ENCODE measurements at regions of chr1 and their contacts with region 1.

Region 1: GRCh38 chr1:154669464-154670282 is 61.7 kb upstream of the ADAR start:
- DNase-seq: peak; percentile 91
- ATAC-seq: peak; percentile 100
- H3K4me3 ChIP-seq: no peak overlapping the region
- H3K27ac ChIP-seq: no peak overlapping the region
- H3K4me1 ChIP-seq: no peaks in the 10 kb centered on the region
- H3K27me3 ChIP-seq: peaks cover 6% of the 10 kb centered on the region; the same call in 1 of the 2 replicates
- CTCF ChIP-seq: peak; percentile 97

Region 2: DNA sequence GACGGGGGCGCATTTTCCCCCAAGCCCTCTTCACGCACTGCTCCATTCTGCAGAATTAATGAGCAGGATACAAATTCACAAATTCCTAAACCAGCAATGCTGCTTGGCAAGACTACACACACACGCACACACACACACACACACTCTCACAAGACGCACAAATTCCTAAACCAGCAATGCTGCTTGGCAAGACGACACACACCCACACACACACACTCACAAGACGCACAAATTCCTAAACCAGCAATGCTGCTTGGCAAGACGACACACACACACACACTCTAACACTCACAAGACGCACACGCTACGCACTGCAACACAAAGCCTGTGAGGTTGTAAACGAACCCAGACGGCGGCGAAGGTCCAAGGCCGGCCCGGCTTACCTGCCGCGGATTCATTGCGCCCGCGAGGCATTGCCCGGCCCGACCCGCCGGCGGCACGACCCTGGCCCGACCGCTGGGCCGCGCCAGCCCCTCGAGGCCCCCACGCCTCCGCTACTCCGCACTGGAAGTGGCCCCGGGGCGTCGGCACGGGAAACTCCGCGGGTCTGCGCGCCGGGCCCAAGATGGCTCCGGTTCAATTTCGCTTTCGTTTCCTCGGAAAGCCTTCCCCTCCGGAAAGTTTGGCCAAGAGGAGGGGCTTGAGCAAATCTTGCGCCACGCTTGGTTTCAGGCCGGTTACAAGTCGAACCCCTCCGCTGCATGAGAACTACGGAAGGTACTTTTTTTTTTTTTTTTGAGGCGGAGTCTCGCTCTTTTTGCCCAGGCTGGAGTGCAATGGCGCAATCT is 61.9 kb before region 1 on chr1 and contains the start of gene ADAR:
- CTCF ChIA-PET with region 1: interaction called, 3 read pairs
- POLR2A ChIA-PET with region 1: interaction called, 16 read pairs
- intact Hi-C with region 1: no loop called
- DNase-seq: peak; percentile 95
- ATAC-seq: peak; percentile 68
- H3K4me3 ChIP-seq: peak within 1 kb of the TSS; percentile 97
- H3K27ac ChIP-seq: peak within 1 kb of the TSS; percentile 85
- H3K4me1 ChIP-seq: peaks cover 17% of the 10 kb centered on the region
- H3K27me3 ChIP-seq: no peaks in the 10 kb centered on the region
- CTCF ChIP-seq: 0 out of 2 replicates have a peak, but pooled peaks have one; percentile 13
- total RNA-seq, gene ADAR: 129 and 136 TPM in 2 replicates

Region 3: GRCh38 chr1:154749078-154749760 is 79.5 kb after region 1 on chr1:
- CTCF ChIA-PET with region 1: no interaction called
- POLR2A ChIA-PET with region 1: no interaction called
- intact Hi-C with region 1: loop called (anchors 1 kb)
- DNase-seq: peak; percentile 79
- ATAC-seq: peak; percentile 92
- H3K4me3 ChIP-seq: no peak overlapping the region
- H3K27ac ChIP-seq: no peak overlapping the region
- H3K4me1 ChIP-seq: no peaks in the 10 kb centered on the region
- H3K27me3 ChIP-seq: peaks cover 86% of the 10 kb centered on the region
- CTCF ChIP-seq: peak; percentile 88

Region 4: GRCh38 chr1:154760469-154760933 is 90.8 kb after region 1 on chr1:
- CTCF ChIA-PET with region 1: no interaction called
- POLR2A ChIA-PET with region 1: no interaction called
- intact Hi-C with region 1: loop called (anchors 1 kb)
- DNase-seq: peak; percentile 56
- ATAC-seq: peak; percentile 89
- H3K4me3 ChIP-seq: no peak overlapping the region
- H3K27ac ChIP-seq: no peak overlapping the region
- H3K4me1 ChIP-seq: no peaks in the 10 kb centered on the region
- H3K27me3 ChIP-seq: peaks cover 44% of the 10 kb centered on the region
- CTCF ChIP-seq: peak; percentile 79

Region 5: GRCh38 chr1:154878371-154879022 is 208.8 kb after region 1 on chr1:
- CTCF ChIA-PET with region 1: interaction called, 8 read pairs
- POLR2A ChIA-PET with region 1: no interaction called
- intact Hi-C with region 1: loop called (anchors 1 kb)
- DNase-seq: peak; percentile 80
- ATAC-seq: peak; percentile 93
- H3K4me3 ChIP-seq: no peak overlapping the region
- H3K27ac ChIP-seq: no peak overlapping the region
- H3K4me1 ChIP-seq: peaks cover 9% of the 10 kb centered on the region
- H3K27me3 ChIP-seq: no peaks in the 10 kb centered on the region
- CTCF ChIP-seq: peak; percentile 97